PC-3 (cell line): ENCODE measurements at regions of chr1 and their contacts with region 1.

Region 1: DNA sequence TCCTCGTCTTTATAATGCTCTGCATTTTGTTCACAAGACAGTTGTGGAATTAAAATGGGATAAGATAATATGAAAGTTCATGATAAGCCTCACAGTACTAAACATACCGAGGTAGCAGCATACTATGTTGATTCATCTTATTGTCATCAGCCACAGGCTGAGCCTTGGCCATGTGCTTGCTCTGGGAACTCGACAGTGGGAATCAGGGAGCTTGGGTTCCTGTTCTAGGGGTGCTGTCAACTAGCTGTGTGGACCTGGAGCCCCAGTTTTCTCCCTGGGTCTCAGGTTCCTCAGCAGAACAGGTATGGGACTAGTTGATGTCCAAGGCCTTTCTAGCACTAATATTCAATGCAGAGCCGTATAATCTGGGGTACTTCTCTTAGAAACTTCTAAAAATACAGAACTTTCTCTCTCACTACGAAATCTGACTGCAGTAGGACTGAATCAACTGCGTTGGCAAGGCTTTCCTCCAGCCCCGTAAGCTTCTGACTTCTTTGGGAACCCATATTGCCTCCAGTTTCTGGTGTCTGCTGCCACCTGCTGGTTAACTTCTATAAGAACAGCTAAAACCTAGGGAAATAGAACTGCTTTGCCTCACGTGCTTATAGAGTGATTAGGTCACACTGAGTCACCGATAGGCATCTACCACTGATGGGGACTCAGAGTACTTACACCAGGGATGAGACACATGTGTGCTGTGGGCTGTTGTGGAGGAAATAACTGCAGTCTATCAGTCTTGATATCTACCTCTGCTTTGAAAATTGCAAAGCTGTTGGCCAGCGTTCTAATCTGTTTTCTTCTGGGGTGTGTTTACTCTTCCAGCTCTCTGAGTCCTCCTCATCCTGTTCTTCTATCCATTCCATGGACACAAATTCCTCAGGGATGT is 110.9 kb downstream of the RGL1 start:
- DNase-seq: peak; percentile 96
- ATAC-seq: peak; percentile 91
- H3K4me3 ChIP-seq: peak overlapping the region; percentile 45; the same call in 1 of the 2 replicates
- H3K27ac ChIP-seq: peak overlapping the region; percentile 86
- H3K4me1 ChIP-seq: peaks cover 13% of the 10 kb centered on the region
- H3K27me3 ChIP-seq: no peaks in the 10 kb centered on the region
- CTCF ChIP-seq: peak; percentile 78

Region 2: DNA sequence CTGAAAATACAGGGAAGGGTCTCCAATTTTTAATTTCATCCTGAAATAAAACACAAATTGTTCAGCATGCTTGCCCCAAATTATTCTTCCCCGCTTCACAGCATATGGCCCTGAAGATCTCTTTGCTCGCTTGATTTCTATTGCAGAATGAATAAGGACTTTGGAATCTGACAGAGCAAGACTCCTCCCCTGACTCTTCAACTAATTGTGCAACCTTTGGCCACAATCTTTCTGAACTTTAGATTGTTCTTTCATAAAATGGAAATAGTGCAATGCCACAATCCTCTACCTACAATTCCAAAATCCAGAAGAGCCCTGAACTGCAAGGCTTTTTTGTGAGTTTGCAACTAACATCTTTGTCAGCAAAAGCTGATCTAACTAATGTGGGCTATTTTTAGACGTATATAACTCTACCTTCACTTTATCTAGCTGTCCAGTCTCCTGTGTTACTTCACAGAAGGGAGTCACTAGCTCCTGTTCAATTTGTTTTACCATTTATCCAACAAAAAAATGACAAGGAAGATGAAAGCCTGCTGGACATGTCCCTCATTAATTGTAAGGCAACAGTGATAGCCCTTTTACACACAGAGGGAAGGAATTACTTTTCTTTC is 1340.2 kb before region 1 on chr1:
- CTCF ChIA-PET with region 1: no interaction called
- POLR2A ChIA-PET with region 1: no interaction called
- intact Hi-C with region 1: no loop called
- DNase-seq: peak; percentile 75
- ATAC-seq: no peak
- H3K4me3 ChIP-seq: peak overlapping the region; percentile 44; the same call in 1 of the 2 replicates
- H3K27ac ChIP-seq: no peak overlapping the region
- H3K4me1 ChIP-seq: peaks cover 14% of the 10 kb centered on the region
- H3K27me3 ChIP-seq: no peaks in the 10 kb centered on the region
- CTCF ChIP-seq: no peak

Region 3: GRCh38 chr1:183655562-183656075 is 260.2 kb before region 1 on chr1:
- CTCF ChIA-PET with region 1: interaction called, 19 read pairs
- POLR2A ChIA-PET with region 1: no interaction called
- intact Hi-C with region 1: loop called (anchors 1 kb)
- DNase-seq: peak; percentile 85
- ATAC-seq: peak; percentile 78
- H3K4me3 ChIP-seq: no peak overlapping the region
- H3K27ac ChIP-seq: no peak overlapping the region
- H3K4me1 ChIP-seq: no peaks in the 10 kb centered on the region
- H3K27me3 ChIP-seq: no peaks in the 10 kb centered on the region
- CTCF ChIP-seq: peak; percentile 79

Region 4: GRCh38 chr1:183685112-183685713 is 230.7 kb before region 1 on chr1:
- CTCF ChIA-PET with region 1: interaction called, 13 read pairs
- POLR2A ChIA-PET with region 1: interaction called, 3 read pairs
- intact Hi-C with region 1: loop called (anchors 1 kb)
- DNase-seq: peak; percentile 67
- ATAC-seq: peak; percentile 55; the same call in 1 of the 2 replicates
- H3K4me3 ChIP-seq: no peak overlapping the region
- H3K27ac ChIP-seq: no peak overlapping the region
- H3K4me1 ChIP-seq: no peaks in the 10 kb centered on the region
- H3K27me3 ChIP-seq: no peaks in the 10 kb centered on the region
- CTCF ChIP-seq: peak; percentile 69

Region 5: DNA sequence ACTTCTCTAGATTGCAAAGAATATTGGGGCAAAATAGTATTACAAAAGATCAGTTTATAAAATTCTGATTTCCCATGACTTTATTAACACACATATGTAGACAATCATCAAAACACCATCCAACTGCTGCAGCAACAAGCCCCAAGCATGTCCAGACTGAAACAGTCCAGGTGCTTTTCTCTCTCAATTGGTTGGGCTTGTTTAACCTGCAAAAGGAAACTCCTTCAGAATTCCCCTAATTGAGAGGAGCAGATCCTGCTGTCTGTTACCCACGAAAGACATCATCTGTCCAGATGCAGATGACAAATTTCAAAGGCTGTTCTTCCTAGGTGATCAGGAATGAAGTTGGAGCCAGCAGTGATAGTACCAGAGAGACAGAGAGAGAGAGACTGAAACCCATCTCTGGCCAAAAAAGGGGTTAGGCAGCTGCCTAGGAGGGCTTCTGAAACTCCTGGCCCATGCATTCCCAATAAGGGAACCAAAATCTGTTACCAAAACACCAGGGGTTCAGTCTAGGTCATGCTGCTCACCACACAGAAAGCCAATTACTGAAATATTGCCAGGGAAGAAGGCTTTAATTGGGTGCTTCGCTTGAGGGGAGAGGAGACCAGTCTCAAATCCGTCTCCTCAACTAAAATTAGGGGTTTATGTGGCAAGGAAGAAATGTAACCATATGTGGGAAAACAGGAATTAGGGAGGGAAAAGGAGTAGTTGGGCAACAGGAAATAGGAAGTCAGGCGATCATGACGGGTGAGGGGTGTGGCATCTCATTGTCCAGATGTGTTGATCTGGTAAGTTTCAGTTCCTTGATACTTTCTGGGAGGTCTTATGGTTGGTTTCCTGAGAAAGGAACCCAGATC is 145.7 kb before region 1 on chr1:
- CTCF ChIA-PET with region 1: no interaction called
- POLR2A ChIA-PET with region 1: no interaction called
- intact Hi-C with region 1: no loop called
- DNase-seq: no peak
- ATAC-seq: no peak
- H3K4me3 ChIP-seq: no peak overlapping the region
- H3K27ac ChIP-seq: no peak overlapping the region
- H3K4me1 ChIP-seq: no peaks in the 10 kb centered on the region
- H3K27me3 ChIP-seq: no peaks in the 10 kb centered on the region
- CTCF ChIP-seq: no peak

Region 6: GRCh38 chr1:183804881-183805841 is 110.7 kb before region 1 on chr1 and contains the start of gene RGL1:
- CTCF ChIA-PET with region 1: no interaction called
- POLR2A ChIA-PET with region 1: no interaction called
- intact Hi-C with region 1: loop called (anchors 5 kb)
- DNase-seq: peak; percentile 67
- ATAC-seq: peak; percentile 85
- H3K4me3 ChIP-seq: peak within 1 kb of the TSS; percentile 76
- H3K27ac ChIP-seq: no peak within 1 kb of the TSS
- H3K4me1 ChIP-seq: peaks cover 32% of the 10 kb centered on the region
- H3K27me3 ChIP-seq: no peaks in the 10 kb centered on the region
- CTCF ChIP-seq: no peak
- total RNA-seq, gene RGL1: 1.5 and 1.9 TPM in 2 replicates

Region 7: GRCh38 chr1:183968386-183968785 is 52.5 kb after region 1 on chr1:
- CTCF ChIA-PET with region 1: no interaction called
- POLR2A ChIA-PET with region 1: no interaction called
- intact Hi-C with region 1: no loop called
- DNase-seq: no peak
- ATAC-seq: no peak
- H3K4me3 ChIP-seq: no peak overlapping the region
- H3K27ac ChIP-seq: no peak overlapping the region
- H3K4me1 ChIP-seq: no peaks in the 10 kb centered on the region
- H3K27me3 ChIP-seq: no peaks in the 10 kb centered on the region
- CTCF ChIP-seq: no peak

Region 8: DNA sequence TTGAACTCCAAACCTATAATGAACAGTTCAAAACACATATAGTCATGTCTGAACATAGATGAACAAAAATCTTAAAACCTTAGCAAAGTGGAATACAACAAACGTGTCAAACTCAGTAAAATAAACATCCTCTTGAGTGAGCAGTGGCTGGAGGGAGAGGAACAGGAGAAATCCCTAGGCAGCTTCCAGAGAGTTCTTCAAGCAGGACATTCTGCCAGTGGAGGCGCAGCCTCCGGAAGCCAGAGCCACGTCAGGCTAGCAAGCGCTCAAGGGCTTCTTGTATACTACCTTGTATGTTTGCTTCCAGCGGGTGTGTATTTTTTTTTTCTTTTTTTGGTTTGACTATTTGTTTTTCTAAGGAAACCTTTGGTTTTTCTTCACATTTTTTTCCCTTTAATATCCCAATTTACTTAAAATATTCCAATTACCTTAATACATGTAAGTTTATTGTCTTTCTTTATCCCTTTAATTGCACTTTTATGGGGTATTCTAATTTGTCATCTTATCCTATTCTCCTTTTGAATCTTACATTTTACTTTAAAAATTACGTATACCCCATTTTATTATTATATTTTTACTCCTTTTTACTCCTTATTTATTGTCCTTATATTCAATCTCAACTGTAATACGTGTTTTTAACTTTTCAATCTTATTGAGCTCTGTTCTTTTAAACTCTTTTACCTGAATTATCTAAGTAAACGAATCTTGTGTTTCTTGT is 79.6 kb after region 1 on chr1:
- CTCF ChIA-PET with region 1: no interaction called
- POLR2A ChIA-PET with region 1: no interaction called
- intact Hi-C with region 1: no loop called
- DNase-seq: no peak
- ATAC-seq: no peak
- H3K4me3 ChIP-seq: no peak overlapping the region
- H3K27ac ChIP-seq: no peak overlapping the region
- H3K4me1 ChIP-seq: peaks cover 24% of the 10 kb centered on the region
- H3K27me3 ChIP-seq: no peaks in the 10 kb centered on the region
- CTCF ChIP-seq: no peak